ENCODE measurements at regions of chr10 and their contacts with region 1.

Region 1: DNA sequence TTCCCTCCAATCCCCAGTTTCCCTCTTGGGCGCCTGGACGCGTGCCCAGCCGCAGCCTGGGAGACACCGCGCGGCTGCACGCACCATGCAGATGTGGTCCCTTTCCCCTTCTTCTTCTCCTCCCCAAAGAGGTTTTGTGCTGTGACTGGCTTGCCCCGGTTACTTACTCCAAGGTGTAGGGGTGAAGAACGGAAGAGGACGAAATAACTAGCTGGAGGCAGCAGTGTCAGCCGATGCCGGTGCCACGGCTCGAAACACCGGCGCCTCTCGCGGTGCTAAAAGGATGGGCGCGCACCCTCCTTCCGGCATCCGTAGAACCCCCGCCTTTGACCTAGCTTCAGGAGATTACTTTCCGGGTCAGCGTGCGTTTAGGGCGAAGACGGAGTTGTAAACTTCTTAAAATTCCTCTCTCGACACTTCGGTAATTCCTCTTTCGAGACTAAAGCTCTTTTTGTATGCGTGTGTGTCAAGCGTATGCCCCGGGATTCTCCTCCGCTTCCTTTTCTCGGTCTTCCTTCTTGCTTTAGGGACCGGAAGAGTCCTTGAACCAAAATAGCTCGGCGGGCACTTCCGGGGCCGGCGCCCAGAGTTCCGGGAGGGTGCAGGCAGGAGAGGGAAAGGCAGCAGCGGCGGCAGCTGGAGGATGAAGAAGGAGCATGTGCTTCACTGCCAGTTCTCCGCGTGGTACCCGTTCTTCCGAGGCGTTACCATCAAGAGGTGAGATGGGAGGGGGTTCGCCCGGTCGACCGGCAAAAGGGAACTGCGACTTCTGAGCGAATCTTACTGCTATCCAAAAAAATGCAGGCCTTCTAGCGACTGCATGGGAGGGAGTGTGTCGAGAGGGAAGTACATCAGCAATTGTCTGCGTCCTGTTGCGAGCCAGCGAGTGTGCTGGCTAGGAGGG is at the starts of genes CDC123 and NUDT5:
- DNase-seq: peak; percentile 85
- ATAC-seq: peak; percentile 89
- H3K4me3 Mint-ChIP-seq: peak within 1 kb of the TSS; percentile 91
- H3K27ac Mint-ChIP-seq: peak within 1 kb of the TSS; percentile 98
- H3K4me1 Mint-ChIP-seq: peaks cover 22% of the 10 kb centered on the region
- H3K27me3 Mint-ChIP-seq: no peaks in the 10 kb centered on the region
- CTCF ChIP-seq: no peak
- total RNA-seq, gene CDC123: 137 to 153 TPM (median 143 TPM) in 3 replicates
- total RNA-seq, gene NUDT5: 107 to 119 TPM (median 109 TPM) in 3 replicates

Region 2: DNA sequence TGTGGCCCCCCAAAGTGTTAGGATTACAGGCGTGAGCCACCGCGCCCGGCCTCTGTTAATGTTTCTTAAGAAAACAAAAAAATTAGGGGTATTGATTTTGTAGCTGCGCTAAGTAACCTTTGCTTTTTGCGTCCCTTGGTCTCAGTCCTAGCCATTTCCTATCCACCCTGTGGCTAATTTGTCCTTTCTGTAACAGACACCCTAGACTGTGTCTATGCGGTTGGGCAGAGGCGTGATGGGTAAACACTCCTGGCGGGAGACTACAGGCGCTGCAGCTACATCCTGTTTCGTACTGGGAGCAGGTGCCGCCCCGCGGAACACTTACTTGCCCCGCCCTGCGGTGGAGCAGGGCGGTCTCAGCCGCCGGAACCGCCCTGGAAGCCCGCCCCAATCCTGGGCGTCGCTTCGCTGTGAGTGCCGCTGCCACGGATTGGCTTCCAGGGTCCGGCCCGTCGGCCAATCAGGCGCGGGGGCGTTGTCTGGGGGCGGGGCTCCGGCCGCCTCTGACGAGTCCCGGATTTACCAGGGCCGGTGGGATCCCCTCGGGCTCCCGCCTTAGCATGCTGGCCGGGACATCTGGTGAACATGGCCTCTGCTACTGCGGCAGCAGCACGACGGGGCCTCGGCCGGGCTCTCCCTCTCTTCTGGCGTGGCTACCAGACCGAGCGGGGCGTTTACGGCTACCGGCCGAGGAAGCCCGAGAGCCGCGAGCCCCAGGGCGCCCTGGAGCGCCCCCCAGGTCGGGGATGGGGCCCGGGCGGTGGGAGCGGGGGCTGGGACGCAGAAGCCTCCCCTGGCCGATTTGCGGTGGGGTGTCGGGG is 127.2 kb before region 1 on chr10 and contains the start of gene DHTKD1:
- CTCF ChIA-PET with region 1: no interaction called
- POLR2A ChIA-PET with region 1: interaction called, 10 read pairs
- DNase-seq: peak; percentile 100
- ATAC-seq: peak; percentile 98
- H3K4me3 Mint-ChIP-seq: peak within 1 kb of the TSS; percentile 83
- H3K27ac Mint-ChIP-seq: peak within 1 kb of the TSS; percentile 98
- H3K4me1 Mint-ChIP-seq: peaks cover 18% of the 10 kb centered on the region
- H3K27me3 Mint-ChIP-seq: no peaks in the 10 kb centered on the region
- CTCF ChIP-seq: no peak
- total RNA-seq, gene DHTKD1: 57.9 to 70.6 TPM (median 66.3 TPM) in 3 replicates

Region 3: GRCh38 chr10:12162927-12163326 is 32.9 kb before region 1 on chr10:
- CTCF ChIA-PET with region 1: no interaction called
- POLR2A ChIA-PET with region 1: interaction called, 11 read pairs
- DNase-seq: no peak
- ATAC-seq: no peak
- H3K4me3 Mint-ChIP-seq: no peak overlapping the region
- H3K27ac Mint-ChIP-seq: no peak overlapping the region
- H3K4me1 Mint-ChIP-seq: no peaks in the 10 kb centered on the region
- H3K27me3 Mint-ChIP-seq: no peaks in the 10 kb centered on the region
- CTCF ChIP-seq: no peak

Measured in WTC11 (cell line).